ENCODE measurements at regions of chr5 and their contacts with region 1.

Region 1: DNA sequence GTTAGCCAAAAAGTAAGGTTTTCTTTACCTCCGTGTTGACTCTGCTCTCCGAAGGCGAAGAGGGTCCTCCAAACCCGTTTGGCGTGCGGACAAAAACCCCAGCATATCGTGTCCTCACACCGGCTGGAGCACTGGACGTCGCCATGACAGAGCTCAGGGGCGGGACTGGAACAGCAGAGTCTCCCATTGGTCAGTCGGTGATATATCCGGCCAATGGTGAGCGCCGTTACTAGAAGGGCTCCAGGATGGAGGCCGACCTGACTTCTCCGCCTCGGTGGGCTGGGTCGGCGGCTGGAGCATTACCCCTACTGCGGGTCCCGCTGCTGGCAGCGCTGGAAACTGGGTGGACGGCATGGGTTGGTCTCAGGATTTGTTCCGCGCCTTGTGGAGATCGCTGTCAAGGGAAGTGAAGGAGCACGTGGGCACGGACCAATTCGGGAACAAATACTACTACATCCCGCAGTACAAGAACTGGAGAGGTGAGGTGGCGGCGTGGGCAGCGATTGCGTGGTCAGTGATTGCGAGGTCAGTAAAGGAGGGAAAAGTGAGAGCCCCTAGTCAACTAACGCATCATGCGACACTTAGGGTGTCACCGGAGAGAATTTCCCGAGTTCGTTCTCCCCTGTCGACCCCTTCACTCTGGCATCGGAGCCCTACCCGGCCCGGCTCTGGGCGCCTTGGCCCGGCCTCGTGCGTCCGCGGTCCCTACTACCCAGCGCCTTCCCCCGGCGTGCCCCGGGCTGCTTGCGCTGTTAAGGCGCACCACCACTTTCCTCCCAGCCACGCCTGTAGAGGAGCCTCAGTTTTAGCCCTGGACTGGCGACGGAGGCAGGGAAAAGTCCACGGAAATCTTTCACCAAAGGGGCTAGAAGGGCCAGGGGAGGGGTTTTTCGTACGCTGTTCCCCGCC is at the starts of genes ERCC8 and NDUFAF2:
- DNase-seq: peak; percentile 85 to 99 (median 93)

Region 2: GRCh38 chr5:61100437-61100836 is 155.3 kb after region 1 on chr5:
- intact Hi-C with region 1: no loop called
- DNase-seq: no peak

Region 3: DNA sequence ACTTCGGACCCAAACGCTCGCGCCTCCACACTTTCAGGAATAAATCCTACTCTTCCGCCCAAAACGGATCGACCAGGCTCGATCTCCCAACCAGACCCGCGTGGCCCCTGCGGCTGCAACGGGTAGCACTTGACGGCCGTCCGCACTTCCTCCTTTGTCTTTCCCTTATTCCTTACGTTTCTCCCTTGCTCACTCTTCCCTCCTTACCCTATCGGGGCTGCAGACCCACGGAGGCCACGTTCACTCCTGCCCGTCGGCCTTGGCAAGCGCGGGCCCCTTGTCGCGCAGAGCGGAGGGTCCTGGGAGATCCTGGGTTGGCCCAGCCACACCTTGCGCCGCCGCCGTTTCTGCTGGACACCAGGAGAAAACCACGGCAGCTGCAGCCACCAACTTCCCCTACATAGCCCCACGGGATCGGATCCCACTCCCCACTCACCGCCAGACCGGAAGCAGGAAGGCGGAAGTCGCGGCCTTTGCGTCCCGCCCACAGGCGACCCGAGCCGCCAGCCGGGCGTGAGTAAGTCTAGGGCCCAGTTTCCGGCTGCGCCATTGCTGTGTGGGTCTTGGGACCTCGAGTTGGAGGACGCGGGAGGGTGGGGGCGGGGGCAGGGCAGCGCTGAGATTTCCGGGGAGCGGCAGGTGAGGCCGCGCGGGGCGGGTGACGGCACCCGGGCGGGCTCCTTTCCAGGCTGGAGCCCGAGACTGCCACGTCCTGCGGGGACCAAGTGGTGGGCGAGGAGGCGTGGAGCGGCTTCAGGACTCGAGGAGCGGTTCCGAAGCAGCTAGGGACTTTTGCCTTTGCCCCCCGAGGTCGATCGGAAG is 217.1 kb after region 1 on chr5 and contains the start of gene SMIM15:
- intact Hi-C with region 1: loop called (anchors 10 kb)
- DNase-seq: peak; percentile 75 to 98 (median 84)

Measured in posterior cingulate gyrus (tissue), 11 donors.